PC-9 (cell line): ENCODE measurements at regions of chr12 and their contacts with region 1.

Region 1: GRCh38 chr12:75390899-75391538 is at the start of gene GLIPR1L2:
- DNase-seq: peak; percentile 89 to 95
- H3K4me3 ChIP-seq: peak within 1 kb of the TSS; percentile 69
- H3K27ac ChIP-seq: peak within 1 kb of the TSS; percentile 56
- H3K4me1 ChIP-seq: peaks cover 21% of the 10 kb centered on the region
- H3K27me3 ChIP-seq: no peaks in the 10 kb centered on the region
- CTCF ChIP-seq: peak; percentile 88
- total RNA-seq, gene GLIPR1L2: 0.30 TPM in 1 of 2 replicates, not detected in the other

Region 2: DNA sequence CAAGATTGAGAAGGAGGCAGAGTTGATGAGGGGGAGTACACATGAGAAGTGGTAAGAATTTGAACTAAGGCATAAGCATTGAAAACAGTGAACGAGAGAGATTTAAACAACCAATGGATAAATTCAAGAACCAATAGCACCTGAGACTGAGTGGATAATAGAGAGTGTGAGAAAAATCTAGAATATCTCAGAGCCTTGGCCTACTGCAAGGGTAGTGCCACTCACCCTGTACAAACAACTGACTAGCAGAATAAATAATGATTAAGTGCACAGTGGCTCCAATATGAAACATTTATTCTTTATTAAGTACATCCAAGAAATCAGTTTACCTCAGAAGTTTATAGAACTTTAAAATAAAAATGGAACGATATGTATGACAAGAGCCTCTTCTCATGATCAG is 115.3 kb before region 1 on chr12:
- CTCF ChIA-PET with region 1: no interaction called
- POLR2A ChIA-PET with region 1: no interaction called
- intact Hi-C with region 1: no loop called
- DNase-seq: no peak
- H3K4me3 ChIP-seq: no peak overlapping the region
- H3K27ac ChIP-seq: no peak overlapping the region
- H3K4me1 ChIP-seq: no peaks in the 10 kb centered on the region
- H3K27me3 ChIP-seq: no peaks in the 10 kb centered on the region
- CTCF ChIP-seq: no peak

Region 3: GRCh38 chr12:75337905-75338304 is 53.1 kb before region 1 on chr12:
- CTCF ChIA-PET with region 1: no interaction called
- POLR2A ChIA-PET with region 1: no interaction called
- intact Hi-C with region 1: no loop called
- DNase-seq: no peak
- H3K4me3 ChIP-seq: no peak overlapping the region
- H3K27ac ChIP-seq: no peak overlapping the region
- H3K4me1 ChIP-seq: no peaks in the 10 kb centered on the region
- H3K27me3 ChIP-seq: no peaks in the 10 kb centered on the region
- CTCF ChIP-seq: no peak

Region 4: GRCh38 chr12:75480469-75480949 is 89.5 kb after region 1 on chr12 and contains the start of gene GLIPR1:
- CTCF ChIA-PET with region 1: interaction called, 3 read pairs
- POLR2A ChIA-PET with region 1: interaction called, 11 read pairs
- intact Hi-C with region 1: loop called (anchors 1 kb)
- DNase-seq: peak; percentile 46 to 69
- H3K4me3 ChIP-seq: no peak within 1 kb of the TSS
- H3K27ac ChIP-seq: no peak within 1 kb of the TSS
- H3K4me1 ChIP-seq: peaks cover 11% of the 10 kb centered on the region; the same call in 1 of the 2 replicates
- H3K27me3 ChIP-seq: no peaks in the 10 kb centered on the region
- CTCF ChIP-seq: no peak
- total RNA-seq, gene GLIPR1: 6.2 and 14.1 TPM in 2 replicates

Region 5: DNA sequence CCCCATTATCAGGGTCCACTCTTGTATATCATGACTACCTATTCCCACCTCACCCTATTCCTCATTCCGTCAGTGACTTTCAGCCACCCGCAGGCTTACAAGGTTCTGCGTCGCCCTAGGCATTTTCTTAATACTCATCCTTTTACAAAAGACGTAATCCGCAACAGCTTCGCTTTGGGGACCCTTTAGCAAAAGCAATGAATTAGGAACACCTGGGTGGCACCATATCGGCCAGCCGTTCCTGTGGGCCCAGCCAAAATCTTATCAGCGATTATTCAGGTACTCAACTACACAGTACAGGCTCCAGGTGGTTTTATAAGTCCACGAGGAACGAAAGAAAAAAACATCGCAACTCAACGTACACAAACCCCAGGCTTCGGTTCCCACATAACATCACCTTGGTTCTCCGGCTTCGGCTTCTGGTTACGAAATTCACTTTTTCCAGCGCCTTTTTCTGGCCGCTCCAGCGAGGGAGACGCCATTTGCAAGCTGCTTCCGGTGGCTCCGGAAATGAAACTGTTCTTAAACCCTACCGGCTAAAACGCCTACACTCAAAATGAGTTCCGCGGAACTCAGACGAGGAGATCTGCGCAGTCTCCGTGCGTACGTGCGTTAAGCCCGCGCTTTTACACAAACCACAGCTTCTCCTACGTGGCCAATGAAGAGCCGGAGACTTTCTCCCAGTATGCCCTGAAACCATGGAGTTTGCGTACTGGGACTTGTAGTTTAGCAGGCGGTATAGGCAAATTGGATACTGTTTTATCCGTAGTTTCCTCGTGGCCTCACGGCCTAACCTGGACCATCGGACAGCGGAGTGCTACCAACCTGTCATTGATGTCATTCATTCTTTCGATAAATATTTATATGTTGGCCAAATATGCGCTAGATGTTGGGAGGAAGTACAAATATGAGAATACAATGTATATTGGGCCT is 120.4 kb after region 1 on chr12 and contains the start of gene KRR1:
- CTCF ChIA-PET with region 1: interaction called, 3 read pairs
- POLR2A ChIA-PET with region 1: interaction called, 3 read pairs
- intact Hi-C with region 1: loop called (anchors 2 kb)
- DNase-seq: peak; percentile 81 to 92
- H3K4me3 ChIP-seq: peak within 1 kb of the TSS; percentile 91
- H3K27ac ChIP-seq: peak within 1 kb of the TSS; percentile 59
- H3K4me1 ChIP-seq: peaks cover 24% of the 10 kb centered on the region
- H3K27me3 ChIP-seq: no peaks in the 10 kb centered on the region
- CTCF ChIP-seq: no peak
- total RNA-seq, gene KRR1: 41.6 and 45.9 TPM in 2 replicates